Thyroid gland (tissue), 4 donors: ENCODE measurements at regions of chr12 and their contacts with region 1.

Region 1: DNA sequence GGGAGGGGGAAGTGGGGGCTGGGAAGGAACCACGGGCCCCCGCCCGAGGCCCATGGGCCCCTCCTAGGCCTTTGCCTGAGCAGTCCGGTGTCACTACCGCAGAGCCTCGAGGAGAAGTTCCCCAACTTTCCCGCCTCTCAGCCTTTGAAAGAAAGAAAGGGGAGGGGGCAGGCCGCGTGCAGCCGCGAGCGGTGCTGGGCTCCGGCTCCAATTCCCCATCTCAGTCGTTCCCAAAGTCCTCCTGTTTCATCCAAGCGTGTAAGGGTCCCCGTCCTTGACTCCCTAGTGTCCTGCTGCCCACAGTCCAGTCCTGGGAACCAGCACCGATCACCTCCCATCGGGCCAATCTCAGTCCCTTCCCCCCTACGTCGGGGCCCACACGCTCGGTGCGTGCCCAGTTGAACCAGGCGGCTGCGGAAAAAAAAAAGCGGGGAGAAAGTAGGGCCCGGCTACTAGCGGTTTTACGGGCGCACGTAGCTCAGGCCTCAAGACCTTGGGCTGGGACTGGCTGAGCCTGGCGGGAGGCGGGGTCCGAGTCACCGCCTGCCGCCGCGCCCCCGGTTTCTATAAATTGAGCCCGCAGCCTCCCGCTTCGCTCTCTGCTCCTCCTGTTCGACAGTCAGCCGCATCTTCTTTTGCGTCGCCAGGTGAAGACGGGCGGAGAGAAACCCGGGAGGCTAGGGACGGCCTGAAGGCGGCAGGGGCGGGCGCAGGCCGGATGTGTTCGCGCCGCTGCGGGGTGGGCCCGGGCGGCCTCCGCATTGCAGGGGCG is at the start of gene GAPDH:
- DNase-seq: peak; percentile 93 to 94
- H3K4me3 ChIP-seq: peak within 1 kb of the TSS; percentile 66 to 90 (median 87)
- H3K27ac ChIP-seq: peak within 1 kb of the TSS; percentile 85 to 93 (median 90)
- H3K4me1 ChIP-seq: peaks cover 30 to 41% of the 10 kb centered on the region in 2 donors
- H3K27me3 ChIP-seq: no peaks in the 10 kb centered on the region
- CTCF ChIP-seq: peak in 1 of 6 experiments; percentile 28
- POLR2A ChIP-seq: peak; percentile 83 to 98
- total RNA-seq, gene GAPDH: 1,191 to 3,596 (median 1,852) TPM

Region 2: GRCh38 chr12:6230321-6231110 is 303.6 kb before region 1 on chr12:
- intact Hi-C with region 1: loop called (anchors 10 kb)
- DNase-seq: peak; percentile 65 to 68
- H3K4me3 ChIP-seq: no peak overlapping the region
- H3K27ac ChIP-seq: peak overlapping the region; percentile 92 to 98 (median 92)
- H3K4me1 ChIP-seq: peaks cover 75 to 99% of the 10 kb centered on the region in 2 donors
- H3K27me3 ChIP-seq: no peaks in the 10 kb centered on the region
- CTCF ChIP-seq: no peak
- POLR2A ChIP-seq: peak in 1 of 2 donors; percentile 37

Region 3: GRCh38 chr12:6335451-6336078 is 198.5 kb before region 1 on chr12:
- intact Hi-C with region 1: loop called (anchors 5 kb)
- DNase-seq: peak; percentile 73
- H3K4me3 ChIP-seq: peak overlapping the region in 1 of 3 donors; percentile 95
- H3K27ac ChIP-seq: peak overlapping the region; percentile 98 to 100 (median 100)
- H3K4me1 ChIP-seq: peaks cover 49 to 75% of the 10 kb centered on the region in 2 donors
- H3K27me3 ChIP-seq: no peaks in the 10 kb centered on the region
- CTCF ChIP-seq: peak; percentile 9 to 59 (median 48)
- POLR2A ChIP-seq: no peak

Region 4: GRCh38 chr12:6423267-6424007 is 110.7 kb before region 1 on chr12:
- intact Hi-C with region 1: loop called (anchors 2 kb)
- DNase-seq: peak; percentile 93 to 94
- H3K4me3 ChIP-seq: no peak overlapping the region
- H3K27ac ChIP-seq: peak overlapping the region; percentile 48 to 82 (median 64)
- H3K4me1 ChIP-seq: peaks cover 18 to 29% of the 10 kb centered on the region in 2 donors
- H3K27me3 ChIP-seq: no peaks in the 10 kb centered on the region
- CTCF ChIP-seq: peak; percentile 52 to 99 (median 90)
- POLR2A ChIP-seq: no peak

Region 5: GRCh38 chr12:6465467-6466183 is 68.5 kb before region 1 on chr12:
- intact Hi-C with region 1: loop called (anchors 5 kb)
- DNase-seq: peak; percentile 60 to 62
- H3K4me3 ChIP-seq: no peak overlapping the region
- H3K27ac ChIP-seq: no peak overlapping the region
- H3K4me1 ChIP-seq: peaks cover 7 to 21% of the 10 kb centered on the region in 2 donors
- H3K27me3 ChIP-seq: no peaks in the 10 kb centered on the region
- CTCF ChIP-seq: peak; percentile 65 to 98 (median 90)
- POLR2A ChIP-seq: no peak

Region 6: GRCh38 chr12:6493497-6494257 is 40.4 kb before region 1 on chr12 and contains the start of gene NCAPD2:
- intact Hi-C with region 1: loop called (anchors 2 kb)
- DNase-seq: peak; percentile 96
- H3K4me3 ChIP-seq: peak within 1 kb of the TSS; percentile 53 to 99 (median 82)
- H3K27ac ChIP-seq: peak within 1 kb of the TSS; percentile 71 to 98 (median 93)
- H3K4me1 ChIP-seq: peaks cover 15 to 18% of the 10 kb centered on the region in 2 donors
- H3K27me3 ChIP-seq: no peaks in the 10 kb centered on the region
- CTCF ChIP-seq: peak in 4 of 6 experiments; percentile 31 to 67 (median 63)
- POLR2A ChIP-seq: no peak
- total RNA-seq, gene NCAPD2: 22.4 to 31.8 (median 28.6) TPM